Activated T-helper 1 cell treated with anti-CD3 and anti-CD28 coated beads, Interleukin-12 subunit alpha, Interleukin-12 subunit beta, Interleukin-2, Interleukin-4 antibody, amounts not matched to agents 30 ng/mL and 10 ng/mL and 1 ng/mL, durations not matched to agents 14 hours and 24 hours and 36 hours (primary cell): ENCODE measurements at regions of chr1 and their contacts with region 1.

Region 1: DNA sequence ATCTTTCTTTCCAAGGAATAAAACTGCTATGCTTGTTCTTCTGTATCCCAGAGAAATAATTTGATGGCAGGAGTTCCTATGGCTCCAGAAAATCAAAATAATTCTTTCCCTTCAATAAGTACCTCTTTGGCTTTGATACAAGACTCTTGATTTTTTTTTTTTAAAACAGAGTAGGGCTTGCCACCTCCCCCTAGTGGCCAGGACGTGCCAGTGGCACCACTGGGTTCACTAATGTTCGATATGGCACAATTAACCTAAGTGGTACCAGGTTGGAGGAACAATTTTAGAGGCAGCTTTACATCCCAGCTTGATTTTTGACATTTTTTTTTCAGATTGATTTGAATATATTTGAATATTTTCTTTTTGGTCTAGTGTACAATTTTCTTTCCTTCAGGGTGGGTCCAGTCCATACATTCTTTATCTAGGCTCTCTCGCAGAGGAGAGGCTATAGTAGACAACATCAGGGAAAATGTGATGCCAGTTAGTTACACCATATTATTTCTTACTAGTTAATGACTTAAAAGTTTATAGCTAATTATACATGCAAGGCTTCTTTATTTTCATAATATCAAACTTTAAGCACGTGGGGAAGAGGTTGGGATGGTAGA is 330.9 kb downstream of the S1PR1 start:
- DNase-seq: peak; percentile 16
- H3K4me3 Mint-ChIP-seq: no peak overlapping the region
- H3K27ac Mint-ChIP-seq: no peak overlapping the region
- H3K4me1 Mint-ChIP-seq: no peaks in the 10 kb centered on the region
- H3K27me3 Mint-ChIP-seq: peaks cover 5% of the 10 kb centered on the region

Region 2: GRCh38 chr1:100921109-100921706 is 646.5 kb before region 1 on chr1:
- intact Hi-C with region 1: loop called (anchors 5 kb)
- DNase-seq: no peak
- H3K4me3 Mint-ChIP-seq: no peak overlapping the region
- H3K27ac Mint-ChIP-seq: no peak overlapping the region
- H3K4me1 Mint-ChIP-seq: peaks cover 29% of the 10 kb centered on the region
- H3K27me3 Mint-ChIP-seq: no peaks in the 10 kb centered on the region

Region 3: DNA sequence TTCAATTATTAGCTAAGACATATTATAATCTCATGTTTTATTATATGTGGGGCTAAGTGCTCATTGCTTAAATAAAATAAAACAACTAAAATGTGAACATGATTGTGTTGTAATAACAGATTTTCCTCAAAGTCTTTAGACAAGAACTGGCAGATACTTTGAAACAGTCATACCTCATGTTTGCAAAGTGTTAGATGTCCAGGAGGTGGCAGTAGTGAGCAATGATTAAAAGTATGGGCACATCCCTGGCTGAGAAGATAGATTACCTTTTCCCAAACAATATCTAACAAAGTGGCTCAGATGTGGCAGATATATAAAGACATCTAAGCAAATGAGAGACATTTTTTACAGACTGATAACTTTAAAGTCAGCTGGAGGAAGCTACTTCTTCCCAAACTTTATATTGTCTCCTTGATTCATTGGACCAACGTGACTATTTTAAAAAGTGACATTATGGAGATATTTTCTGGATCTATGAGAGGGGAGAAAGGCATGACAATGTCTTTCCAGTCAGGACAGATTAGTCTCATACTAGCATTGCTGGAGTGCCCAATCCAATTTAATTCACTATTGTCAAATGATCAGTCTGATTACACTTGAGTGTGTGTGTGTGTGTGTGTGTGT is 61.0 kb before region 1 on chr1:
- intact Hi-C with region 1: loop called (anchors 1 kb)
- DNase-seq: peak; percentile 4
- H3K4me3 Mint-ChIP-seq: no peak overlapping the region
- H3K27ac Mint-ChIP-seq: no peak overlapping the region
- H3K4me1 Mint-ChIP-seq: no peaks in the 10 kb centered on the region
- H3K27me3 Mint-ChIP-seq: peaks cover 20% of the 10 kb centered on the region

Region 4: GRCh38 chr1:101520302-101520701 is 47.4 kb before region 1 on chr1:
- intact Hi-C with region 1: loop called (anchors 1 kb)
- DNase-seq: no peak
- H3K4me3 Mint-ChIP-seq: no peak overlapping the region
- H3K27ac Mint-ChIP-seq: no peak overlapping the region
- H3K4me1 Mint-ChIP-seq: no peaks in the 10 kb centered on the region
- H3K27me3 Mint-ChIP-seq: peaks cover 13% of the 10 kb centered on the region